Right ventricle myocardium inferior (tissue), 1 donor: ENCODE measurements at regions of chr3 and their contacts with region 1.

Region 1: GRCh38 chr3:15287565-15288330 is 44.6 kb downstream of the SH3BP5 start:
- DNase-seq: peak; percentile 79
- ATAC-seq: peak; percentile 93

Region 2: DNA sequence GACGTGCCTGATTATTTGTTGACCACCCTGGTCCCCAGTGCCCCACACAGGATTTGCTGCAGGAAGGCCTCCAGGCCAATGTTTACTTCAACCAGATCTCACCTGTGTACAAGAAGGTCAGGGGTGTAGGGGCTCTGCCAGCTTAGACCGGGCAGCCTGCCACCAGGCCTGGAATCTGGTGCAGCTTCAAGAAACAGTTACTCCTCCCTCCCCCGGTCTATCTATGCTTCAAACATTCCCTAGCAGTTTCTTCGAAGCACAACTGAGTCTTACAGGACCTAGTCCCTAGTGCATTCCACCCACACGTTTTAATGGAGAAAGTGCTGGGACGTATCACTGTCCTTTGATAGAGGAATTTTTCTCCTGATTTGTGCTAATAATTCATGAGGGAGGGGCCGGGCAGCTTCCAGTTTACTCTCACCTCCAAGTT is 36.6 kb after region 1 on chr3:
- intact Hi-C with region 1: loop called (anchors 5 kb)
- DNase-seq: peak; percentile 70
- ATAC-seq: peak; percentile 17

Region 3: GRCh38 chr3:15458212-15458780 is 170.5 kb after region 1 on chr3:
- intact Hi-C with region 1: no loop called
- DNase-seq: no peak
- ATAC-seq: no peak